ENCODE measurements at regions of chr11 and their contacts with region 1.

Region 1: DNA sequence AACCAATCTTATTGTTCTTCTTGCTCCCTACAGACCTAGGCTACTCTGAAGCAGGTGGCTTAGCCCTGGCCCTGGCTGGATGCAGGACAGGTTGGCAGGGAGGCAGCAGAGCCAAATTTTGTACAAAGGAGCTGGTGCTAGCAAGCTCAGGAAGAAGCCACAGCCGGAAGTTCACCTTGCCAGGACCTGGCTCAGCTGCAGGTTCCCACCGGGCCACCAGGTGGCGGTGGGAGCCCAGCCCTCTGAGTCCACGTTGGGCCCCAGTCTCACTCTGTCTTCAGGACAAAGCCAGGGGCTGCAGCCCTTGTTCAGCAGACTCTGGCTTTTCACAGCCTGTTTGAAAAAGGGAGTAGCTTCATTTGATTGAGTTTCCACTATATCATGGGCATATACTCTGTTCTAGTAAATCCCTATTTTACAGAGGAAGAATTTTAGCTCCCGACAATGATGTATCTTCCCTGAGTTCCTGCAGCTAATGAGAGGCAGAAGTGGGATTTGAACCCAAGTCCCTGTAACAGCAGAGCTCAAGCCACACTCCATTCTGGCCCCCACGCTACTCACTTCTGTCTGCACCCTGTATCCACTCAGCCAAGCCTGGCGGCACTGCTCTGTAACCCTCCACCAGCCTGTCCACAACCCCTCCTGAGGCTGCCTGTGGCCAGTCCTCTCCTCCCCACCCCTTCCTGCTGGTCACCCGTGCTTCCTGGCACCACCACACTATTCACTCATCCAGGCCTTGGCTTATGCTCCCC is 3.3 kb downstream of the TKFC start:
- DNase-seq: peak; percentile 69 to 83 (median 79)
- H3K4me3 ChIP-seq: no peak overlapping the region
- H3K4me3 Mint-ChIP-seq: no peak overlapping the region
- H3K27ac ChIP-seq: no peak overlapping the region
- H3K27ac Mint-ChIP-seq: peak overlapping the region in 3 of 7 donors; percentile 42 to 78 (median 69)
- H3K4me1 ChIP-seq: peaks cover 25 to 33% of the 10 kb centered on the region in 2 donors
- H3K4me1 Mint-ChIP-seq: peaks cover 35% of the 10 kb centered on the region
- H3K27me3 ChIP-seq: no peaks in the 10 kb centered on the region
- H3K27me3 Mint-ChIP-seq: peaks cover 1 to 2% (median 2%) of the 10 kb centered on the region in 3 donors
- CTCF ChIP-seq: peak; percentile 95

Region 2: GRCh38 chr11:61161190-61162091 is 174.9 kb before region 1 on chr11 and contains the start of gene VPS37C:
- intact Hi-C with region 1: no loop called
- DNase-seq: peak; percentile 90 to 95 (median 94)
- H3K4me3 ChIP-seq: peak within 1 kb of the TSS; percentile 56 to 76 (median 68)
- H3K4me3 Mint-ChIP-seq: peak within 1 kb of the TSS; percentile 85 to 93
- H3K27ac ChIP-seq: peak within 1 kb of the TSS; percentile 93 to 100
- H3K27ac Mint-ChIP-seq: peak within 1 kb of the TSS; percentile 99 to 100 (median 100)
- H3K4me1 ChIP-seq: peaks cover 64 to 71% of the 10 kb centered on the region in 2 donors
- H3K4me1 Mint-ChIP-seq: peaks cover 75% of the 10 kb centered on the region
- H3K27me3 ChIP-seq: no peaks in the 10 kb centered on the region
- H3K27me3 Mint-ChIP-seq: peaks cover 0 to 10% (median 0%) of the 10 kb centered on the region in 3 donors
- CTCF ChIP-seq: no peak
- polyA plus RNA-seq, gene VPS37C: 1.9 to 25.1 (median 3.8) TPM

Region 3: DNA sequence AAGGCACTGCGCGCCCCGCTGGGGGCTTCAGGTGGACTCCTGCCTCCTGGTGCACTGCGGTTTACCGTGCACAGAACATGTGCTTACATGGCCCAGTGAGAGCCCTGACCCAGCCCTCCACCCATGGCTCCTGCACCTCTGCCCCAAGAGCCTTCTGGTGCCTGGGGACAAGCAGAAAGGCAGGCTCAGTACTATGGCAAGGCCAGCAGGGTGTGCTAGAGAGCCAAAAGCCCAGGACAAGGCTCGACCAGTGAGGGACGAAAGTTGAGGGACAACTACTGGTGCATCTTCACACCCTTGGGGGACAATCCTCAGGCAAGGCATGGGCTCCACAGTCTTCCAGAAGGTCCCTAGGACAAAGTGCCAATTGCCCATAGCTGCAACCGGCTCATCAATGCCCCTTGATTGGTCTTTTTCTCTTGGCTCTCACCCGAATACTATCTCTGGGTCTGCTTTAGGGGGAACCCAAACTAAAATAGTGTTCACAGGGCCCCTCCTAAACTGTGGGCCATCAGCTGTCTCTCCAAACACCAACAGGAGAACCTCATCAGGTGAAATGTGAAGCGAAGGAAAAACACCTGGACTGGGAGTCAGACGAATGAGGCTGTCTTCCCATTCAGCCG is 81.8 kb before region 1 on chr11:
- intact Hi-C with region 1: no loop called
- DNase-seq: peak; percentile 59 to 69 (median 64)
- H3K4me3 ChIP-seq: no peak overlapping the region
- H3K4me3 Mint-ChIP-seq: no peak overlapping the region
- H3K27ac ChIP-seq: no peak overlapping the region
- H3K27ac Mint-ChIP-seq: no peak overlapping the region
- H3K4me1 ChIP-seq: peaks cover 21 to 23% of the 10 kb centered on the region in 2 donors
- H3K4me1 Mint-ChIP-seq: peaks cover 21% of the 10 kb centered on the region
- H3K27me3 ChIP-seq: no peaks in the 10 kb centered on the region
- H3K27me3 Mint-ChIP-seq: peaks cover 0 to 6% (median 5%) of the 10 kb centered on the region in 3 donors
- CTCF ChIP-seq: peak; percentile 93

Region 4: GRCh38 chr11:61270354-61271076 is 65.8 kb before region 1 on chr11:
- intact Hi-C with region 1: no loop called
- DNase-seq: no peak
- H3K4me3 ChIP-seq: no peak overlapping the region
- H3K4me3 Mint-ChIP-seq: no peak overlapping the region
- H3K27ac ChIP-seq: no peak overlapping the region
- H3K27ac Mint-ChIP-seq: no peak overlapping the region
- H3K4me1 ChIP-seq: no peaks in the 10 kb centered on the region
- H3K4me1 Mint-ChIP-seq: no peaks in the 10 kb centered on the region
- H3K27me3 ChIP-seq: no peaks in the 10 kb centered on the region
- H3K27me3 Mint-ChIP-seq: peaks cover 0 to 7% (median 6%) of the 10 kb centered on the region in 3 donors
- CTCF ChIP-seq: no peak

Region 5: GRCh38 chr11:61384271-61385242 is 48.2 kb after region 1 on chr11:
- intact Hi-C with region 1: loop called (anchors 1 to 2 kb)
- DNase-seq: peak in 1 of 3 donors; percentile 20
- H3K4me3 ChIP-seq: no peak overlapping the region
- H3K4me3 Mint-ChIP-seq: no peak overlapping the region
- H3K27ac ChIP-seq: no peak overlapping the region
- H3K27ac Mint-ChIP-seq: peak overlapping the region in 2 of 7 donors; percentile 36 to 80
- H3K4me1 ChIP-seq: peaks cover 27 to 31% of the 10 kb centered on the region in 2 donors
- H3K4me1 Mint-ChIP-seq: peaks cover 28% of the 10 kb centered on the region
- H3K27me3 ChIP-seq: no peaks in the 10 kb centered on the region
- H3K27me3 Mint-ChIP-seq: peaks cover 2 to 9% (median 3%) of the 10 kb centered on the region in 3 donors
- CTCF ChIP-seq: no peak

Region 6: GRCh38 chr11:61429691-61430582 is 93.6 kb after region 1 on chr11 and contains the starts of genes CPSF7 and SDHAF2:
- intact Hi-C with region 1: loop called (anchors 2 to 5 kb)
- DNase-seq: peak; percentile 95 to 98 (median 96)
- H3K4me3 ChIP-seq: peak within 1 kb of the TSS; percentile 83 to 96 (median 87)
- H3K4me3 Mint-ChIP-seq: peak within 1 kb of the TSS; percentile 94 to 98
- H3K27ac ChIP-seq: peak within 1 kb of the TSS; percentile 96 to 98
- H3K27ac Mint-ChIP-seq: peak within 1 kb of the TSS; percentile 98 to 100 (median 100)
- H3K4me1 ChIP-seq: peaks cover 17 to 37% of the 10 kb centered on the region in 2 donors
- H3K4me1 Mint-ChIP-seq: peaks cover 36% of the 10 kb centered on the region
- H3K27me3 ChIP-seq: no peaks in the 10 kb centered on the region
- H3K27me3 Mint-ChIP-seq: no peaks in the 10 kb centered on the region
- CTCF ChIP-seq: no peak
- polyA plus RNA-seq, gene CPSF7: 12.5 to 67.5 (median 20.1) TPM
- polyA plus RNA-seq, gene SDHAF2: 45.5 to 70.2 (median 64.8) TPM

Region 7: GRCh38 chr11:61439615-61440014 is 103.3 kb after region 1 on chr11:
- intact Hi-C with region 1: loop called (anchors 2 to 5 kb)
- DNase-seq: no peak
- H3K4me3 ChIP-seq: no peak overlapping the region
- H3K4me3 Mint-ChIP-seq: no peak overlapping the region
- H3K27ac ChIP-seq: no peak overlapping the region
- H3K27ac Mint-ChIP-seq: peak overlapping the region in 1 of 7 donors; percentile 61
- H3K4me1 ChIP-seq: peaks cover 0 to 3% of the 10 kb centered on the region in 2 donors
- H3K4me1 Mint-ChIP-seq: peaks cover 6% of the 10 kb centered on the region
- H3K27me3 ChIP-seq: no peaks in the 10 kb centered on the region
- H3K27me3 Mint-ChIP-seq: no peaks in the 10 kb centered on the region
- CTCF ChIP-seq: no peak

Region 8: DNA sequence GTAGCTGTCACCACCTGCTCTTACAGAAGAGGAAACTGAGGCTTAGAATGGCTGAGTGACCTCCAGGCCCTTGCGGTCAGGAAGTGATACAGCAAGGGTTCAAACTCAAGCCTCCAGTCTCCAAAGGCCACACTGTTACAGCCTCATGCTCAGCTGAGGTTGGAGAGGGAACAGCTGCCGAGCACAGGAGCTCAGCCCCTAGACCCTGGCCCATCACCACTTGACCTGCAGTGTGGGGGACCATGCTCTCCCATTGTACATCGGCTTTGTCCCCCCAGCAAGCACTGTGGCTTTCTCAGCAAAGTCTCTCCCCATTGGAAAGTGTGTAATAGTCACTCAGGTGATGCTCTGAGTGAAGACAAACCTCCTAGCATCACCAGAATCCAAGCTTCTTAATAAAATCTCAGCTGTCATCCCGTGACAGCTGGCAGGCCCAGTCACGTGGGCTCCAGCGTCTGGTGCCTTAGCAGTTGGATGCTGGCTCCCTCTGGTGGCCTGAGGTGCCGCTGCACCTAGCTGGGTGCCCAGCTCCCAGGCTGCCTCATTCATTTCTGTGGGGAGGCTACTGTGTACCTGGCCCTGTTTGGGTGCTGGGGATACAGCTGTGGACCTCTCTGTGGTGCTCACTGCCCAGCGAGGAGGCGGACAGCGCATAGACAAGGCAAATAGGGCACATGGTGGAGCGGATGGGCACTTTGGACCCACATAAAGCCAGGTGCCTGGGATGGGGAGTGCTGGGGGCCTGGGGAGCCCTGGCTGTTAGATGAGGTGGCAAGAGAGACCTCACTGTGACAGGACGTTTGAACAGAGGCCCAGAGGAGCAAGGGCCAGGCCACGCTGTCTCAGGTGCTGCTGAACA is 397.0 kb after region 1 on chr11:
- intact Hi-C with region 1: no loop called
- DNase-seq: peak; percentile 86 to 95 (median 89)
- H3K4me3 ChIP-seq: no peak overlapping the region
- H3K4me3 Mint-ChIP-seq: no peak overlapping the region
- H3K27ac ChIP-seq: peak overlapping the region in 1 of 2 donors; percentile 76
- H3K27ac Mint-ChIP-seq: peak overlapping the region in 6 of 7 donors; percentile 70 to 81 (median 73)
- H3K4me1 ChIP-seq: peaks cover 0 to 5% of the 10 kb centered on the region in 2 donors
- H3K4me1 Mint-ChIP-seq: peaks cover 7% of the 10 kb centered on the region
- H3K27me3 ChIP-seq: no peaks in the 10 kb centered on the region
- H3K27me3 Mint-ChIP-seq: peaks cover 0 to 1% (median 0%) of the 10 kb centered on the region in 3 donors
- CTCF ChIP-seq: peak; percentile 94